Posterior cingulate gyrus (tissue), 11 donors: ENCODE measurements at regions of chr1 and their contacts with region 1.

Region 1: DNA sequence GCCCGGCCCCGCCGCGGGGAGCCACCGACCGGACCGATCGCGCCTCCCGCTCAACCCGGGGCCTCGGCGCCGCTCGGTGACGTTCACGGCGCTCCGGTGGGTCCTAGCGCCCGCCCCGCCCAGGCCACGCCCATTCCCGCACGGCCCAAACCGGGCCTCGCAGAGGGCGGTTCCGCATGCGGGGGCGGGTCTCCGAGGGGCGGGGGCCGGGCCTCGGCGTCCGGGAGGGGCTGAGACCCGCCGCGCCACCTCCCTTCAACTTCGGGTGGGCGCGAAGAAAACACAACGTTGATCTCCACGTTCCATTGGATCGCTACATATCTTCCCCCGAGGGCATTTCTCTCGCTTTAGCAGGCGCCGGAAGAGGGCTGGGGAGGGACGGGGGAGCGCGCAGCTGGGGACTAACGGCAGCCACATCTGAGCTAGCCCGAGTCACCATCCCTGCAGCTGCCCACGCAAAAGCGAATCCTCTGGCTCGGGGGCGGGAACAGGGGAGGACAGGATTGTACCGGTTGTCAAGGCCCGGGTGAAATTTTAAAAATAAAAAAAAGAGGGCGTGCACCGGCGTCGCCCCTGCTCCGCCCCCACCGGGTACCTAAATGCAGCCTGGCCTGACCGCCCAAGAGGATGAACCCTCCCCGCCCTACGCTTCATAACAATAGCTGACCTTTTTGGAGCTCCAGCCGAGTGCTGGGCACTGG is at the start of gene MAD2L2:
- DNase-seq: peak; percentile 82 to 98 (median 87)

Region 2: DNA sequence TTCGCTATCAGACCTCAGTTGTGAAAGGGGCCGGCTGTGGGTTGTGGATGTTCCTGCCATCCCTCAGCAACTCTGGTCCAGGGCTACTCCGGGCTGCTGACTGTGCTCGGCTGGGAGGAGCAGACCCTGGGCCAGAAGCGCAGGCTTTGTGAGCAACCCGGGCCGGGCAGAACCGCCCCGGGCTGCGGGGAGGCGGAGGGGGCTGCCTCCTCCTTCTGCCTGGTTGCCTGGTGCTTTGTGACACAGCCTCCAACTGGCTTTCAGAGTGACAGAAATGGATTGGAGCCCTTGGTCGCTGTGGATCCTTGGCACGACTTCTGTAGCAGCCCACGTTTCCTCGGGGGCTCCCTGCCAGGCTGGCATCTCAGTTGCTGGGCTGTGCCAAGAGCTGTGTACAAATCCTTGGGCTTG is 20.3 kb after region 1 on chr1:
- intact Hi-C with region 1: loop called (anchors 1 kb)
- DNase-seq: peak; percentile 62 to 95 (median 76)

Region 3: DNA sequence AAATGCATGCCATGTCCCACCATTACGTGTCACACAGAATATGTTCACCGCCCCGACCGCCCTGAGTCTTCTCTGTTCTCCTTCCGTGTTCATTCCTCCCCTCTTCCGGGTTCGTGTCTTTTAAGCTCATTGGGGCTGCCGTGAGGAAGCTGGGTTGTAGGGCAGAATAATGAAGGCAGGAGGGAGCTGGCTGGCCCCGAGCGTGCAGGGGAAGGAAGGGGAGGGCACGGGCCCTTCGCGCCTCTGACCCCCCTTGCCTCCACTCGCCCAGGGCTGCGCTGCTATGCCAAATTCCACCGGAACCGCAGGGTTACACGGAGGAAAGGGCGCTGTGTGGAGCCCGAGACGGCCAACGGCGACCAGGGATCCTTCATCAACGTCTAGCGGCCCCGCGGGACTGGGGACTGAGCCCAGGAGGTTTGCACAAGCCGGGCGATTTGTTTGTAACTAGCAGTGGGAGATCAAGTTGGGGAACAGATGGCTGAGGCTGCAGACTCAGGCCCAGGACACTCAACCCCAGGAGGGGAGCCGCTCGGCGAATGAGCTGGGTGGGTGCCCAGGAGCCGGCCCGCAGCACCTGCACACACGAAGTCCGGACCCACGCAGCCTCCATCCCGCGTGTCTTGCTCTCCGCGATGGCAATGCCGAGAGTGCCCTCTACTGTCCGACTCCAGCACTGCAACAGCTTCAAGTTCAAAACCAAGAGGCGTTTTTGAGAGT is 38.3 kb after region 1 on chr1:
- intact Hi-C with region 1: loop called (anchors 1 kb)
- DNase-seq: peak; percentile 76 to 98 (median 90)